Activated B cell treated with CpG ODN at 0.5 μM for 24 hours (primary cell): ENCODE measurements at regions of chr2 and their contacts with region 1.

Region 1: DNA sequence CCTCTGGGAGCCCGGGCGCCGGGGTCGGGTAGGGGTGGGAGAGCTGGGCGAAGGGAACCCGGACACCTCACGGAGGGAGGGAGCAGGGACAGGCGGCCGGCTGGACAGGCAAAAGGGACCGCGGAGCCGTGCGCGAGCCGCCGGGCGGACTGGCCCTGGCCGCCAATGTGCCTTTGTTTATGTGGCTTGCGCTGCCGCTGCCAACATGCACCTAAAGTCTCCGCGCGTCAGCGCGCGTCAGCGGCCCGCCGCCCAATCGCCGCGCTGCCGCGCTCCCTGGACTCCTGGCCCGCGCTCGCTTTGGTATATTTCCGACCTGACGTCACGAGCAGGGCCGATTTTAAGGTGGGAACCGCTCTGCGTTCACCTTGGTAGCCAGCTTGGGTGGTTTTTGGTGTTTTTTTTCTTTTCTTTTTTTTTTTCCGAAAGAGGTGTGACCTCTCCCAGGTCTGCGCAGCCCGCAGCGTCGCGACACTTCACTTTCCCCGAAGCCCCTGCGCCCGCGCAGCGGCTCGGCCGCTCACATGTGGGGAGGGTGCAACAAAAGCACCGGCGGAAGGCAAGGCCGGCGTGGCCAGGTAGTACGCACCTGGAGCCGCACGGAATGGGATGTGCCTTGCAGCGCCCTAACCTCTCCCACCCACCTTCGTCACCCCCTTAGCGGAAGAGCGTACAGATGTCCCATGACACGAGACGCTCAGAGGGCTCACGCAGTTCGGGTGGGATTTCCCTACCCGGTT is at the start of gene NR4A2:
- DNase-seq: peak; percentile 81
- ATAC-seq: peak; percentile 56
- H3K4me3 Mint-ChIP-seq: peak within 1 kb of the TSS; percentile 91
- H3K27ac Mint-ChIP-seq: peak within 1 kb of the TSS; percentile 94
- H3K4me1 Mint-ChIP-seq: peaks cover 53% of the 10 kb centered on the region
- H3K27me3 Mint-ChIP-seq: peaks cover 26% of the 10 kb centered on the region
- CTCF ChIP-seq: no peak
- total RNA-seq, gene NR4A2: 6.7 and 7.5 TPM in 2 replicates

Region 2: GRCh38 chr2:156294945-156295580 is 37.6 kb before region 1 on chr2:
- CTCF ChIA-PET with region 1: no interaction called
- POLR2A ChIA-PET with region 1: no interaction called
- intact Hi-C with region 1: no loop called
- DNase-seq: no peak
- ATAC-seq: no peak
- H3K4me3 Mint-ChIP-seq: no peak overlapping the region
- H3K27ac Mint-ChIP-seq: no peak overlapping the region
- H3K4me1 Mint-ChIP-seq: no peaks in the 10 kb centered on the region
- H3K27me3 Mint-ChIP-seq: peaks cover 7% of the 10 kb centered on the region
- CTCF ChIP-seq: no peak

Region 3: DNA sequence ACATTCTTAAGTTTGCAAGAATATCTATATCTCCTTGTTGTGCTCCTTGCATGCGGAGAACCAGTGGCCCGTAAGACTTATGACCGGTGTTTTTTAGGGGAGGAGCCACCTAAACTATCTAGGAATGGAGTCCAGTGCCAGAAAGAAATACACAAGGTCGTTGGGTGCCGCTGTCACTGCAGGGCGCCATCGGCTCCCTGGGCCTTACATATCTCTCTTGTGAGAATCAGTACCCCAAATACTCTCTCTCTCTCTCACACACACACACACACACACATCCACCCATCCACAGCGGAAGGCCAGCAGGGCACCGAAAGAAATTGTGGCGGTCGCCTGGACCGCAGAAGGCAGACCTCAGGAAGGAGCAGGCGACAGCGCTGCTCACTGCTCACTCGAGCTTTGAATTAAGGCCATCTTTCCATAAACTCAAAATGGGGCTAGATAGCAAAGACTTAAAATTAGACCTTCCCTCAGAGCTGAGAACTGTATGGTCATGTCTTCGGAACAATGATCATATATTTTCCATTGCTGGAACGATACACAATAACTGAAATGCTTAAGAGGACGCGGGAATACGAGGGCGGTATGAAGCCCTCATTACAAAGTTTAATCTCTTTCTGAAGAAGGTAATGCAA is 10.5 kb before region 1 on chr2:
- CTCF ChIA-PET with region 1: interaction called, 8 read pairs
- POLR2A ChIA-PET with region 1: interaction called, 5 read pairs
- intact Hi-C with region 1: loop called (anchors 1 kb)
- DNase-seq: no peak
- ATAC-seq: peak; percentile 16
- H3K4me3 Mint-ChIP-seq: peak overlapping the region; percentile 56
- H3K27ac Mint-ChIP-seq: peak overlapping the region; percentile 3
- H3K4me1 Mint-ChIP-seq: peaks cover 38% of the 10 kb centered on the region
- H3K27me3 Mint-ChIP-seq: peaks cover 78% of the 10 kb centered on the region
- CTCF ChIP-seq: no peak

Region 4: GRCh38 chr2:156435715-156436496 is 103.2 kb after region 1 on chr2 and contains the start of gene GPD2:
- CTCF ChIA-PET with region 1: interaction called, 7 read pairs
- POLR2A ChIA-PET with region 1: interaction called, 40 read pairs
- intact Hi-C with region 1: loop called (anchors 1 kb)
- DNase-seq: peak; percentile 72
- ATAC-seq: peak; percentile 79
- H3K4me3 Mint-ChIP-seq: peak within 1 kb of the TSS; percentile 95
- H3K27ac Mint-ChIP-seq: peak within 1 kb of the TSS; percentile 90
- H3K4me1 Mint-ChIP-seq: peaks cover 31% of the 10 kb centered on the region
- H3K27me3 Mint-ChIP-seq: no peaks in the 10 kb centered on the region
- CTCF ChIP-seq: no peak
- total RNA-seq, gene GPD2: 17.8 and 18.3 TPM in 2 replicates

Region 5: DNA sequence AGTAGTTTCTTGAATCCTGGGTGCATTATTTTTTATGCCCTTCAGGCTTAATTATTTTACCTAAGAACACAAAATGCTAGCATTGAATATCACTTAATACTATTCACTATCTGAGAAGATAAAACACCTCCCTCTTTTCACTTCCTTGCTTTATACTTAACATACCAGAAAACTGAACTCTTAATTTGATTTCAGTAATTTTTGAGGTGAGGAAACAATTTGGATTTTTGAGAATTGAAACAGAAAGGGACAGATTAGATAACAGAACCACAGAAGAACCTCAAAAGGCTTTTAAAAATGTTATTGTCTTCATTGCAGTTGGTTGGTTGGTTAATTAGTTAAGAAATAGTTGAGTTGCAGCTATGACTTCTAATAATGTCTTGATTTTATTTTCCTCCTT is 173.0 kb after region 1 on chr2:
- CTCF ChIA-PET with region 1: no interaction called
- POLR2A ChIA-PET with region 1: no interaction called
- intact Hi-C with region 1: no loop called
- DNase-seq: no peak
- ATAC-seq: no peak
- H3K4me3 Mint-ChIP-seq: no peak overlapping the region
- H3K27ac Mint-ChIP-seq: no peak overlapping the region
- H3K4me1 Mint-ChIP-seq: peaks cover 3% of the 10 kb centered on the region
- H3K27me3 Mint-ChIP-seq: no peaks in the 10 kb centered on the region
- CTCF ChIP-seq: no peak

Region 6: GRCh38 chr2:156538083-156538504 is 205.4 kb after region 1 on chr2:
- CTCF ChIA-PET with region 1: interaction called, 3 read pairs
- POLR2A ChIA-PET with region 1: interaction called, 19 read pairs
- intact Hi-C with region 1: loop called (anchors 1 kb)
- DNase-seq: no peak
- ATAC-seq: peak; percentile 82
- H3K4me3 Mint-ChIP-seq: peak overlapping the region; percentile 67
- H3K27ac Mint-ChIP-seq: peak overlapping the region; percentile 85
- H3K4me1 Mint-ChIP-seq: peaks cover 34% of the 10 kb centered on the region
- H3K27me3 Mint-ChIP-seq: no peaks in the 10 kb centered on the region
- CTCF ChIP-seq: no peak

Region 7: GRCh38 chr2:156818221-156818620 is 485.5 kb after region 1 on chr2:
- CTCF ChIA-PET with region 1: no interaction called
- POLR2A ChIA-PET with region 1: no interaction called
- intact Hi-C with region 1: no loop called
- DNase-seq: no peak
- ATAC-seq: no peak
- H3K4me3 Mint-ChIP-seq: no peak overlapping the region
- H3K27ac Mint-ChIP-seq: no peak overlapping the region
- H3K4me1 Mint-ChIP-seq: no peaks in the 10 kb centered on the region
- H3K27me3 Mint-ChIP-seq: no peaks in the 10 kb centered on the region
- CTCF ChIP-seq: no peak

Region 8: GRCh38 chr2:157420771-157421323 is 1088.1 kb after region 1 on chr2:
- CTCF ChIA-PET with region 1: no interaction called
- POLR2A ChIA-PET with region 1: interaction called, 3 read pairs
- intact Hi-C with region 1: loop called (anchors 5 kb)
- DNase-seq: no peak
- ATAC-seq: peak; percentile 73
- H3K4me3 Mint-ChIP-seq: peak overlapping the region; percentile 63
- H3K27ac Mint-ChIP-seq: peak overlapping the region; percentile 90
- H3K4me1 Mint-ChIP-seq: peaks cover 58% of the 10 kb centered on the region
- H3K27me3 Mint-ChIP-seq: no peaks in the 10 kb centered on the region
- CTCF ChIP-seq: no peak

Region 9: GRCh38 chr2:157468931-157469708 is 1136.4 kb after region 1 on chr2:
- CTCF ChIA-PET with region 1: no interaction called
- POLR2A ChIA-PET with region 1: interaction called, 3 read pairs
- intact Hi-C with region 1: loop called (anchors 2 kb)
- DNase-seq: no peak
- ATAC-seq: peak; percentile 81
- H3K4me3 Mint-ChIP-seq: peak overlapping the region; percentile 81
- H3K27ac Mint-ChIP-seq: peak overlapping the region; percentile 99
- H3K4me1 Mint-ChIP-seq: peaks cover 87% of the 10 kb centered on the region
- H3K27me3 Mint-ChIP-seq: no peaks in the 10 kb centered on the region
- CTCF ChIP-seq: no peak